Spleen (tissue), 13 donors: ENCODE measurements at regions of chr4 and their contacts with region 1.

Region 1: GRCh38 chr4:19224820-19225219 is 1026.9 kb upstream of the SLIT2 start:
- DNase-seq: no peak
- H3K4me3 ChIP-seq: no peak overlapping the region
- H3K27ac ChIP-seq: no peak overlapping the region
- H3K4me1 ChIP-seq: no peaks in the 10 kb centered on the region
- H3K27me3 ChIP-seq: no peaks in the 10 kb centered on the region
- CTCF ChIP-seq: peak in 5 of 11 experiments; percentile 8 to 38 (median 28)
- POLR2A ChIP-seq: no peak

Region 2: GRCh38 chr4:19346636-19347035 is 121.8 kb after region 1 on chr4:
- intact Hi-C with region 1: no loop called
- DNase-seq: no peak
- H3K4me3 ChIP-seq: no peak overlapping the region
- H3K27ac ChIP-seq: no peak overlapping the region
- H3K4me1 ChIP-seq: no peaks in the 10 kb centered on the region
- H3K27me3 ChIP-seq: no peaks in the 10 kb centered on the region
- CTCF ChIP-seq: no peak
- POLR2A ChIP-seq: no peak

Region 3: GRCh38 chr4:19636451-19636850 is 411.6 kb after region 1 on chr4:
- intact Hi-C with region 1: no loop called
- DNase-seq: no peak
- H3K4me3 ChIP-seq: no peak overlapping the region
- H3K27ac ChIP-seq: no peak overlapping the region
- H3K4me1 ChIP-seq: no peaks in the 10 kb centered on the region
- H3K27me3 ChIP-seq: no peaks in the 10 kb centered on the region
- CTCF ChIP-seq: no peak
- POLR2A ChIP-seq: no peak

Region 4: DNA sequence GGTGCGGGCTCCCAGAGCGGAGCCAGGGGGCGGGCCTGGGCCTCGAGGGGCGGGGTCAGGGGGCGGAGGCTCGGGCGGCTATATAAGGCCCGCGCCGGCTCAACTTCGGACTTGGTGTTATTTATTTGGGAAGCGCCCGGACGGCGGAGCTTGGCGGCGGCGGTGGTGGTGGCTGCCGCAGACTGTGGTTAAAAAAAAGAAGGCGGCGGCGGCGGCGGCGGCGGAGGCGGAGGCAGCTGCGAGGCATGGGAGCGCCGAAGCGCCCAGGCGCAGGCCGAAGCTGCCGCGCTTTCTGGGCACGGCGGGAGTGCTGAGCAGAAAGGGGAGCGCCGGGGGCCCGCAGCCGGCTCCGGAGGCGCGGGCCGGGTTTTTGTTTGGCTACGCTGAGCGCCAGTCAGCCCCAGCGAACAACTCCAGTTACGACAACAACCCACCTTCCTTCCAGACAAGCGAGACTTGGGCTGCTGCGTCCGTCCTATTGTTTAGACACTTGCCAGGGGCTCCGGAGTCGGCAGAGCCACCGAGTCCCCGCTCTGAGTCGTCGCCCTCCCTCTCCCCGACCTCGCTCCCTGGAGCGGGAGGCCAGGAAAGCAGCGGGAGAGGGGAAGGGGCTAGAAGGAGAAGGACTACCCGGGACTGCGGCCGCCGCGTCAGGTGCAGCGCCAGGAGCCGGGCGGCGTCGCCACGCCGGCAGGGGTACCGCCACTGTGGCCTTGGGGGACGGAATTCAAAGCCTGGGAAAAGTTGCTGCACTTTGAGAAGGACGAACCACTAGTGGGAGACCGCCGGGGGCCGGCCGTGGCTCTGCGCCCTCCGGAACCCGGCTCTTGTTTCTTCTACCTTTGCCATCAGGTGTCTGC is 1027.2 kb after region 1 on chr4 and contains the start of gene SLIT2:
- intact Hi-C with region 1: loop called (anchors 10 kb)
- DNase-seq: peak; percentile 86
- H3K4me3 ChIP-seq: peak within 1 kb of the TSS; percentile 53 to 77 (median 61)
- H3K27ac ChIP-seq: peak within 1 kb of the TSS; percentile 53 to 83 (median 74)
- H3K4me1 ChIP-seq: peaks cover 0 to 76% (median 21%) of the 10 kb centered on the region in 6 donors
- H3K27me3 ChIP-seq: peaks cover 0 to 65% (median 33%) of the 10 kb centered on the region in 7 donors
- CTCF ChIP-seq: peak in 2 of 11 experiments; percentile 18 to 28
- POLR2A ChIP-seq: peak in 1 of 3 donors; percentile 80
- total RNA-seq, gene SLIT2: 29.8 to 128 (median 69.9) TPM